Dendritic cell treated with granulocyte-macrophage colony-stimulating factor and Interleukin-4, amounts not matched to agents 40 ng/mL and 50 ng/mL, for 4 days (primary cell): ENCODE measurements at regions of chr11 and their contacts with region 1.

Region 1: DNA sequence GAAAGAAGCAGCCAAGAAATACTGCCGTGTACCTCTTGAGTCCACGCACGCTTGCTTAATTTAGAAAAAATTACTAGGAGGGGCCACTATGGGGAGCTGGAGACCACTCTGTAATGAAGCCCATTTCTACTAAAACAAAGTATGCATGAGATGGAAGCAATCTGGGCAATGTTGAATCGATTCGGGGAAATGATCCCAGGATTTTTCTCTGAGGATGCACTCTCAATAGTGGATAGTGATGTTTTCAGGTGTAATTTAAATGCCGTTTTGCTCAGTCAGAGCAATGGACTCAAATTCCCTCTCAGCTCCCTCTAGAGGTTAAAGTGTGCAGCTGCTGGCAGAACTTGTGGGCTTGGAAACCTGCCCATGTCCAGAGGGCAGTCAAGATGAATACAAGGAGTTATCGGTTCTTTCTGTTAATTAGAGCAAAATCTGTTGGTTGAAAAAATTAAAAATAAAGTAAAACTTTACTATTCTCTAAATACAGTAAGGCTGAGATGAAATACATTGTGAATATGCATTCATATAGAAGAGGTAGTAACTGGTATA is 64.1 kb downstream of the ME3 start:
- H3K4me3 Mint-ChIP-seq: no peak overlapping the region
- H3K27ac Mint-ChIP-seq: no peak overlapping the region
- H3K4me1 Mint-ChIP-seq: no peaks in the 10 kb centered on the region
- H3K27me3 Mint-ChIP-seq: no peaks in the 10 kb centered on the region

Region 2: GRCh38 chr11:86818466-86819192 is 210.3 kb after region 1 on chr11:
- intact Hi-C with region 1: loop called (anchors 1 kb)
- H3K4me3 Mint-ChIP-seq: no peak overlapping the region
- H3K27ac Mint-ChIP-seq: no peak overlapping the region
- H3K4me1 Mint-ChIP-seq: peaks cover 9% of the 10 kb centered on the region
- H3K27me3 Mint-ChIP-seq: peaks cover 10% of the 10 kb centered on the region